ENCODE measurements at regions of chr1 and their contacts with region 1.

Region 1: GRCh38 chr1:95233737-95234500 is at the start of gene RWDD3:
- DNase-seq: peak; percentile 96
- ATAC-seq: peak; percentile 96
- H3K4me3 Mint-ChIP-seq: peak within 1 kb of the TSS; percentile 86
- H3K27ac Mint-ChIP-seq: peak within 1 kb of the TSS; percentile 91
- H3K4me1 Mint-ChIP-seq: peaks cover 38% of the 10 kb centered on the region
- H3K27me3 Mint-ChIP-seq: peaks cover 6% of the 10 kb centered on the region
- total RNA-seq, gene RWDD3: 10.5 to 14.3 TPM

Region 2: DNA sequence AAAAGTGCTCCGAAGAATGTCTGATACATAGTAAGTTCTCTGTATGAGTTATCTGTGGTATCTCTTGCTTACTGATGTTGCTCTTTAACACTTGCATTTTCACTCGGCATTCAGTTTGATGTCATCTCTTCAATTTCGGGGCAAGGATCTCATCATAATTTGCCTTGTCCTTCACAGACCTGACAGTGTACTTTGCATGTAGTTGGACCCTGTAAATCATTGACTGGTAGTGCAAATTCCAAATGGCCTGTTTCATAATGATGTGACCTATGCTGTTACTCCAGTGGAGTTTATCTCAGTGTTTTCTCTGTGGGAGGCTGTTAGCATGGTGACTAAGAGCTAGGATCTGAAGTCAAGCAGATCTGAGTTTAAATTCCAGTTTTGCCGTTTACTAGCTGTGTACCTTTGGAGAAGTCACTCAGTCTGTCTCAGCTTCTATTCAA is 849.9 kb before region 1 on chr1:
- CTCF ChIA-PET with region 1: no interaction called
- POLR2A ChIA-PET with region 1: no interaction called
- intact Hi-C with region 1: loop called in 1 of 2 experiments (anchors 10 kb)
- DNase-seq: peak; percentile 22
- ATAC-seq: peak; percentile 76
- H3K4me3 Mint-ChIP-seq: peak overlapping the region; percentile 61
- H3K27ac Mint-ChIP-seq: peak overlapping the region; percentile 92
- H3K4me1 Mint-ChIP-seq: peaks cover 62% of the 10 kb centered on the region
- H3K27me3 Mint-ChIP-seq: no peaks in the 10 kb centered on the region

Region 3: GRCh38 chr1:94541175-94542087 is 692.5 kb before region 1 on chr1 and contains the start of gene F3:
- CTCF ChIA-PET with region 1: no interaction called
- POLR2A ChIA-PET with region 1: no interaction called
- intact Hi-C with region 1: loop called in 1 of 2 experiments (anchors 5 kb)
- DNase-seq: peak; percentile 90
- ATAC-seq: peak; percentile 98
- H3K4me3 Mint-ChIP-seq: peak within 1 kb of the TSS; percentile 68
- H3K27ac Mint-ChIP-seq: no peak within 1 kb of the TSS
- H3K4me1 Mint-ChIP-seq: peaks cover 13% of the 10 kb centered on the region
- H3K27me3 Mint-ChIP-seq: peaks cover 64% of the 10 kb centered on the region
- total RNA-seq, gene F3: 0.07 TPM in 1 of 2 experiments, not detected in the other

Region 4: GRCh38 chr1:94926915-94927404 is 307.0 kb before region 1 on chr1 and contains the start of gene CNN3:
- CTCF ChIA-PET with region 1: no interaction called
- POLR2A ChIA-PET with region 1: no interaction called
- intact Hi-C with region 1: loop called in 1 of 2 experiments (anchors 1 kb)
- DNase-seq: peak; percentile 80
- ATAC-seq: peak; percentile 87
- H3K4me3 Mint-ChIP-seq: peak within 1 kb of the TSS; percentile 69
- H3K27ac Mint-ChIP-seq: peak within 1 kb of the TSS; percentile 74
- H3K4me1 Mint-ChIP-seq: peaks cover 13% of the 10 kb centered on the region
- H3K27me3 Mint-ChIP-seq: peaks cover 35% of the 10 kb centered on the region
- total RNA-seq, gene CNN3: 2.5 to 3.1 TPM

Region 5: GRCh38 chr1:95072532-95073419 is 161.1 kb before region 1 on chr1 and contains the start of gene ALG14:
- CTCF ChIA-PET with region 1: interaction called, 8 read pairs
- POLR2A ChIA-PET with region 1: interaction called, 8 read pairs
- intact Hi-C with region 1: loop called (anchors 1 to 2 kb)
- DNase-seq: peak; percentile 95
- ATAC-seq: peak; percentile 97
- H3K4me3 Mint-ChIP-seq: peak within 1 kb of the TSS; percentile 91
- H3K27ac Mint-ChIP-seq: peak within 1 kb of the TSS; percentile 98
- H3K4me1 Mint-ChIP-seq: peaks cover 17% of the 10 kb centered on the region
- H3K27me3 Mint-ChIP-seq: peaks cover 2% of the 10 kb centered on the region
- total RNA-seq, gene ALG14: 5.3 to 7.3 TPM

Region 6: GRCh38 chr1:95116580-95117206 is 117.2 kb before region 1 on chr1:
- CTCF ChIA-PET with region 1: interaction called, 6 read pairs
- POLR2A ChIA-PET with region 1: no interaction called
- intact Hi-C with region 1: loop called in 1 of 2 experiments (anchors 1 kb)
- DNase-seq: peak; percentile 74
- ATAC-seq: peak; percentile 71
- H3K4me3 Mint-ChIP-seq: peak overlapping the region; percentile 76
- H3K27ac Mint-ChIP-seq: peak overlapping the region; percentile 69
- H3K4me1 Mint-ChIP-seq: peaks cover 8% of the 10 kb centered on the region
- H3K27me3 Mint-ChIP-seq: peaks cover 44% of the 10 kb centered on the region

Region 7: GRCh38 chr1:95216292-95216990 is 17.5 kb before region 1 on chr1:
- CTCF ChIA-PET with region 1: no interaction called
- POLR2A ChIA-PET with region 1: no interaction called
- intact Hi-C with region 1: no loop called
- DNase-seq: no peak
- ATAC-seq: no peak
- H3K4me3 Mint-ChIP-seq: no peak overlapping the region
- H3K27ac Mint-ChIP-seq: no peak overlapping the region
- H3K4me1 Mint-ChIP-seq: peaks cover 3% of the 10 kb centered on the region
- H3K27me3 Mint-ChIP-seq: peaks cover 29% of the 10 kb centered on the region

Region 8: DNA sequence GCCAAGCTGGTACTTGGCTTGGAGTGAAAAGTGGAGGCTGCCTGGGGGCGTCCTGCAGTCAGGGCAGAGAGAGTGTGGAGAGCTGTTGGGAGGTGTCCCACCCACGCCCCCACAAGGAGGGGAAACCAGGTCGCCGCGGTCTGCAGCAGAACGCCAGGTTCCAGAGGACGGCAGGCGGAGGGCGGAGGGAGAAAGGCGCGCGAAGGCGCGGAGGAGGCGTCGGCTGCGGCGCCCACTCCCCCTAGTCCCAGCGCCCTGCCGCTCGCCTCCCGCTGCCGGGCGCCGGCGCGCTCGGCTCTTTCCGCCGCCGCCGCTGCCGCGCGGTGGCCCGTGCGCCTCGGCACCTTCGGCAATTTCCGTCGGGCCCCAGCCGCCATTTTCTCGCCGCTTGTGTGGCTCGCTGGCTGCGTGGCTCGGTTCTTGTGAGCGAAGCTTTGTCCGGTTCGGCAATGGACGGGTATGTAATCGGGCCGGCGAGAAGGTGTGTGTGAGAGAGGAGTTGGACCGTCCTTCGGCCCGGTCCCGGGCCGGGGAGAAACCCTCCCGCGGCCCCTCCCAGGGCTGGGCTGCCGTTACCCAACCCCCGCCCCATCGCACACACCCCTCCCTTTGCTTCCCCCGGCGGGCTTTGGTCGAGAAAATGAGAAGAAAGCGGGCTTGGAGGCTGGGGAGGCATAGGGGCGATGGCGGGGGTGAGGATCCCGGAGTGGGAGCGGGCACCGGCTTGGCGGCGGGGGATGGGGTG is 1487.7 kb after region 1 on chr1 and contains the start of gene PTBP2:
- CTCF ChIA-PET with region 1: no interaction called
- POLR2A ChIA-PET with region 1: no interaction called
- intact Hi-C with region 1: loop called in 1 of 2 experiments (anchors 1 kb)
- DNase-seq: peak; percentile 90
- ATAC-seq: peak; percentile 95
- H3K4me3 Mint-ChIP-seq: peak within 1 kb of the TSS; percentile 95
- H3K27ac Mint-ChIP-seq: peak within 1 kb of the TSS; percentile 81
- H3K4me1 Mint-ChIP-seq: peaks cover 22% of the 10 kb centered on the region
- H3K27me3 Mint-ChIP-seq: no peaks in the 10 kb centered on the region
- total RNA-seq, gene PTBP2: 13.5 to 14.8 TPM

Measured in activated CD4-positive, alpha-beta T cell treated with anti-CD3 and anti-CD28 coated beads for 36 hours (primary cell).